ENCODE measurements at regions of chr5 and their contacts with region 1.

Region 1: DNA sequence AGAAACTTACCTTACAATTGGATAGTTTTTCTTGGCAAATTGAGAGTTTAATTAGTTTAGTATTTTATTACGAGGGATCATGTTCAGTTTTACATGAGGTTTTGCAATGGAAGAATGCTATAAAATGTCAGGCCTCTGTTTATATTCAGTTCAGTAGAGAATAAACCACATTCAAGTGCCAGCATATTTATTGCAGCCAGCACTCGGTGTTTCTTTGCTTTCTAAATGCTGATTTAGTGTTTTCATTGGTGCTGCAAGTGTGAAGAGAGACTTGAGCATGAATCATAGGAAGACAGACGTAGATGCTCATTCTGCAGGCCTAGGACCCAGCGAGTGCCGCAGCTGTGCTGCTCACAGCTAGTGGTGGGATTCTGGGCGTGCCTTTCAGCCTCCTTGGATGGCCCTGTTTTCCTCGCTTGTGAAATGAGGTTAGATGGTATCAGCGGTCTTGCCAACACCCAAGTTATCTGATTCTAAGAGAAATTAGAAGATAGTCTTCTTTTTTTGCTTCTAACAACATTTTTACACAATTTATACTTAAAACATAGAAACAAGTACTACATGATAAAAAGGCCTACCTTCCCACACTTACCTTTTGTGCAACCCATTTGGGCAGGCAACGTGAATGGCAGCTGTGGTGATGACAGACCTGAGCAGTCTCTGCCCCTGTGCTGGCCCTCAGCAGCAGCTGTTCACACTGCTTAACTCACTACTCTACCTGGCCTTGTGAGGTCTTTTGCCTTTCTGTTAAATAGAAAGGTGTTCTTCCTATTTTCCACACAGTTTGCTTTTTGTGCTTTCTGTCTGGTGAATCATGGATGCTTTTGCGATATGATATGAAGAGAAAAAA is 26.8 kb upstream of the TNFAIP8 start:
- DNase-seq: peak; percentile 76
- H3K4me3 Mint-ChIP-seq: peak overlapping the region; percentile 57
- H3K27ac Mint-ChIP-seq: peak overlapping the region; percentile 94
- H3K4me1 Mint-ChIP-seq: peaks cover 93% of the 10 kb centered on the region
- H3K27me3 Mint-ChIP-seq: no peaks in the 10 kb centered on the region

Region 2: DNA sequence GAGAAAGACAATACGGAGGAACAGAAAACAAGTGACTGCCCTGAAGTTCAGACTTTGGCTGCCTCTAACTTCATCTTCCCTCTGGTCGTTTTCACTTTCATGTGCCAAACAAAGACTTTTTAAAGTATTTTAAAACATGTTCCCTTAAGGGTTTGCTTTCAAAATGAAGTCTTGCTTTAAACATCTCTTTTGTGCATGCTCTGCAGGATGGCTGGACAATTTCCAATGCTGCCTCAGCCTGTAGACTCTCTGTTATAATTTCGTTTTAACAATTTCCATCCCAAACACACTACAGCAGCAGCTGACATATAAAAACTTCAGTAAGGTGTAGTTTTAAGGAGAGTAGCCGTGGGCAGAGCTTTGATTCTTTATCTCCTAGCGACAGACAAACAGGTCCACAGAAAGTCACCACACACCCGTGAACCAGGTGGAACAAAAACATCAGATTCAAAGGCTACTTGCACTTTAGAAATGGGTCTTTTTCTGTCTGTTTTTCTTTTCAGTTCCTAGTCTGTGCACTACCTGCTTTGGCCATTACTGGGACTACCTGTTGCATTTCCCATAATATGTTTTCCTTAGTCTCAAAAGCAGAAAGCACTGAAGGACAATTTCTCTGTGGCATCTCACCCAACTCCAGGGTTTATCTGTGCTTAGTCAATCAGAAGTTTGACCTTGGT is 649.6 kb before region 1 on chr5:
- CTCF ChIA-PET with region 1: no interaction called
- intact Hi-C with region 1: no loop called
- DNase-seq: no peak
- H3K4me3 Mint-ChIP-seq: no peak overlapping the region
- H3K27ac Mint-ChIP-seq: no peak overlapping the region
- H3K4me1 Mint-ChIP-seq: no peaks in the 10 kb centered on the region
- H3K27me3 Mint-ChIP-seq: no peaks in the 10 kb centered on the region

Region 3: GRCh38 chr5:119031905-119032304 is 297.1 kb before region 1 on chr5:
- CTCF ChIA-PET with region 1: no interaction called
- intact Hi-C with region 1: loop called (anchors 1 kb)
- DNase-seq: peak; percentile 42
- H3K4me3 Mint-ChIP-seq: no peak overlapping the region
- H3K27ac Mint-ChIP-seq: peak overlapping the region; percentile 89
- H3K4me1 Mint-ChIP-seq: peaks cover 46% of the 10 kb centered on the region
- H3K27me3 Mint-ChIP-seq: no peaks in the 10 kb centered on the region

Region 4: GRCh38 chr5:119187776-119188529 is 141.0 kb before region 1 on chr5:
- CTCF ChIA-PET with region 1: no interaction called
- intact Hi-C with region 1: no loop called
- DNase-seq: no peak
- H3K4me3 Mint-ChIP-seq: no peak overlapping the region
- H3K27ac Mint-ChIP-seq: no peak overlapping the region
- H3K4me1 Mint-ChIP-seq: peaks cover 11% of the 10 kb centered on the region
- H3K27me3 Mint-ChIP-seq: no peaks in the 10 kb centered on the region

Region 5: DNA sequence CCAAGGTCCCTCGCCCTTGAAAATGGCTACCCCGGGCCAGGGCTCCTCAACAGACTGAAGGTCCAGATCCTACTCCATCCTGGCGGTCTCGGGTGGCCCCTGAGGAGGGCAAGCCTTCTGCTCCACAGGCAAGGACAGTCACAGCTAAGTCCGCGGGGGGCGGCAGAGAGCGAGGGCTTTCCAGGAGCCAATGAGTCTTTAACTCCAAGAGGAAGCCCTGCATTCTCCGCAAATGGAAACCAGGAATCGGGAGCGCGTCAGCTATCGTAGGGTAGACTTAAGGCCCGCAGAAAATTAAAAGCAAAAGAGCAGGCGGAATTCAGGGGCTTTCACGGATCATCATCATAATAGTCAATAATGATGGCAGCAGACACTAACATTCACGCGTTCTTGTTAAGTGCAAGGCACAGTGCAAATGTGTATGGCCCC is 61.0 kb before region 1 on chr5:
- CTCF ChIA-PET with region 1: interaction called, 9 read pairs
- intact Hi-C with region 1: loop called (anchors 1 kb)
- DNase-seq: peak; percentile 93
- H3K4me3 Mint-ChIP-seq: peak overlapping the region; percentile 91
- H3K27ac Mint-ChIP-seq: peak overlapping the region; percentile 97
- H3K4me1 Mint-ChIP-seq: peaks cover 64% of the 10 kb centered on the region
- H3K27me3 Mint-ChIP-seq: no peaks in the 10 kb centered on the region

Region 6: DNA sequence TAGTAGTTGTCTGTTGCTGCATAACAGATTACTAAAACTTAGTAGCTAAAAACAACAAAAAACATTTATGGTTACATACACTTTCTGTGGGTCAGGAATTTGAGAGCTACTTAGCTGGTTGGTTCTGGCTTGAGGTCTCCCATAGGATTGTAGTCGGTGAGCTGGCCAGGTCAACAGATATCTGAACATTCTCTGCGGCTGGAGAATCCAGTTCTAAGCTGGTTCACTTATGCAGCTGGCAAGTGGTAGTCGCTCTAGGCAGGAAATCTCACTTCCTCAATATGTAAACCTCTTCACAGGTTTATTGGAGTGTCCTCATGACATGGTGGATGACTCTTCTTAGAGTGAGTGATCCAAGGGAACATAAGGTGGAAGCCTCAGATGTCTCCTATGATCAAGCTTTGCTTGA is 38.8 kb before region 1 on chr5:
- CTCF ChIA-PET with region 1: no interaction called
- intact Hi-C with region 1: loop called (anchors 1 kb)
- DNase-seq: peak; percentile 44
- H3K4me3 Mint-ChIP-seq: peak overlapping the region; percentile 19
- H3K27ac Mint-ChIP-seq: peak overlapping the region; percentile 90
- H3K4me1 Mint-ChIP-seq: peaks cover 83% of the 10 kb centered on the region
- H3K27me3 Mint-ChIP-seq: no peaks in the 10 kb centered on the region

Region 7: GRCh38 chr5:119315516-119315949 is 13.4 kb before region 1 on chr5:
- CTCF ChIA-PET with region 1: interaction called, 18 read pairs
- intact Hi-C with region 1: loop called (anchors 1 kb)
- DNase-seq: peak; percentile 83
- H3K4me3 Mint-ChIP-seq: peak overlapping the region; percentile 36
- H3K27ac Mint-ChIP-seq: peak overlapping the region; percentile 96
- H3K4me1 Mint-ChIP-seq: peaks cover 94% of the 10 kb centered on the region
- H3K27me3 Mint-ChIP-seq: no peaks in the 10 kb centered on the region

Region 8: DNA sequence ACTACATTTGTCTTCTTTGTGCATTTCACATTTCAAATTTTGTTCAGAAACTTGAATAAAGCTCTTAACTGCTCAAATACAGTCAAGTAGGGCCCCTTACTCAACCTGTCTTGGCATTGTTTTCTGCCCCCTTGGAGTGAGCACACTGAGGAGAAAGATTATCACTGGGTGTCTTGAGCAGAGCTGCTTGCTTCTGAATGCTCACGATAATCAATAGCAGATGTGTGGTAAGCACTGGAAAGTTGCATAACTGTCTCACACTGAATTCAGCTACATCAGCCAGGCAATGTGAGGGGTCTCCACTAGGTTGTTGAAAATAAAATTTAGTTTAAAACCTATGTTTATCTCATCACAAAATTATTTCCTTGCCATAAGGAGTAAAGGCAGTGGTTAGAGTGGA is 19.0 kb after region 1 on chr5:
- CTCF ChIA-PET with region 1: interaction called, 13 read pairs
- intact Hi-C with region 1: no loop called
- DNase-seq: no peak
- H3K4me3 Mint-ChIP-seq: no peak overlapping the region
- H3K27ac Mint-ChIP-seq: peak overlapping the region; percentile 88
- H3K4me1 Mint-ChIP-seq: peaks cover 86% of the 10 kb centered on the region
- H3K27me3 Mint-ChIP-seq: no peaks in the 10 kb centered on the region

Region 9: DNA sequence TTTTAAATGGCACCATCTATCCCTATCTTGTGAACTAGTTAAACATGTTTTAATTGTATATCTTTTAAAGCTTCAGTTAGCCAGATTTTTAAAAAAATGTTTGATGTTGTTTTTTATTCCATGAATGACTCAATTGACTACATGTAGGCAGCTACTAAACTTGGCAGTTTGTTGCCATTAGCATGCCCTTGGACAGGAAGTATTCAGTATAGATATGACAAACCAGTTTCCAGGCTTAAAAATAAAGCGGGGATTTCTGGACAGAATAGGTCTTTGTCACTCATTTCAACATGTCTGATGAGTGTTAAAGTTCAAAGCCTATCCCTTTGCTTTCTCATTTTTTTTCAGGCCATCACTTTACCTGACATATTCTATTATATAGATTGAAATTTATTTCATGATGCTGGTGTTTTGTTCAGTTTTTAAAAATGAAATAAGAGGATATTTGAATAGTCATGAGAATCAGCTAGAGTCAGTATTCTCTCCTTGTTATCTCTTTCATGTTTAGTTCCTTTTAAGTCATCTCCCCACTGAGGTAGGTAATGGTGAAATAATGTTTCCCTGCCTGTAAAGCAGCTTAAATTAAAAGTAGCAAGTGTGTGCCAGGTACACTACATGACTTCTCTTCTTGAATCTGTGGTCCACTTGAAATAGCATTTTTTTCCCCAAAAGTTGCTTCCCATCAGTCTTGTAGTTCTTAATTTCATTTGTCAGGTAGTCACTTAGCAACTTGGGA is 38.7 kb after region 1 on chr5:
- CTCF ChIA-PET with region 1: interaction called, 9 read pairs
- intact Hi-C with region 1: loop called (anchors 1 kb)
- DNase-seq: no peak
- H3K4me3 Mint-ChIP-seq: peak overlapping the region; percentile 60
- H3K27ac Mint-ChIP-seq: peak overlapping the region; percentile 98
- H3K4me1 Mint-ChIP-seq: peaks cover 87% of the 10 kb centered on the region
- H3K27me3 Mint-ChIP-seq: no peaks in the 10 kb centered on the region

Measured in activated naive CD4-positive, alpha-beta T cell treated with anti-CD3 and anti-CD28 coated beads for 36 hours (primary cell).